GM18951 (cell line): ENCODE measurements at regions of chr13 and their contacts with region 1.

Region 1: GRCh38 chr13:51797664-51798488 is 6.1 kb downstream of the DHRS12 start:
- POLR2A ChIP-seq: no peak

Region 2: DNA sequence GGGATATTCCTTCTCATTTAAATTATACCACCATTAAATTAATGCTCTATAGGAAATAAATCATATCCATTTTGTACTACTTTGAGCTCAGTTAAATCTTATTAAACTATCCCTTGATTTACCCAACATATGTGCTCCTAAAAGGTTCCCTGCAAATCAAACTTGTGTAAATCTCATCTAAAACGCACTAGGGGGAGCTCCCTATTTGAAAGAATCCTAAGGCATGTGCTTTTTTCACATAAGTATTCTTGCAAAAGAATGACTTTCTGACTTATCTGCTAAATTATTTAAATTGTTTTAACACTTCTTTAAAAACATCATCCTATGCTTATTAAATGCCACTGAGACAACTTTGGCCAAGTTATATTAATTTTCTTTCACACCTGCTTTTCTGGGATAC is 353.0 kb before region 1 on chr13:
- in situ Hi-C with region 1: loop called (anchors 5 kb)
- POLR2A ChIP-seq: no peak